ENCODE measurements at regions of chr7 and their contacts with region 1.

Region 1: GRCh38 chr7:78052112-78052511 is 253.5 kb downstream of the PHTF2 start:
- DNase-seq: no peak
- ATAC-seq: no peak
- H3K4me3 ChIP-seq: no peak overlapping the region
- H3K27ac ChIP-seq: no peak overlapping the region
- H3K4me1 ChIP-seq: no peaks in the 10 kb centered on the region
- H3K27me3 ChIP-seq: peaks cover 27% of the 10 kb centered on the region
- CTCF ChIP-seq: no peak

Region 2: DNA sequence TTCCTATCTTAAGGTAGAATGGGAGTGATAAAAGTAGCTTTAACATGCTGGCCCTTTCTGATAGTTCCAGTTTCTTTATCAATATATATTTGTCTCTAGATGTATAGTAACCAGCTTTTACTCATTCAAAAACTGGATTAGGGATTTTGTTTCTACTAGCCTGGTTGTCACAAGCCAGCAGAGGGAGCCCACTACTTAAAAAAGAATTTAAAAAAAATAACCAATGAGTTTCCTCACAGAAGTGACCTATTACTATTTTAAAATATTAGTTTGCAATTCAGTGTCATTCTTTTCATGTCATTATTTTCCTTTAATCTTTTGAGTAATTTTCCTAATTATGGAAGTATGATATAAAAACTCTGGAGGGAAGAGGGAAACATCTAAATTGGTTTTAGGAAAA is 111.5 kb before region 1 on chr7:
- CTCF ChIA-PET with region 1: interaction called, 11 read pairs
- POLR2A ChIA-PET with region 1: no interaction called
- intact Hi-C with region 1: no loop called
- DNase-seq: peak; percentile 45
- ATAC-seq: peak; percentile 59
- H3K4me3 ChIP-seq: no peak overlapping the region
- H3K27ac ChIP-seq: no peak overlapping the region
- H3K4me1 ChIP-seq: no peaks in the 10 kb centered on the region
- H3K27me3 ChIP-seq: no peaks in the 10 kb centered on the region
- CTCF ChIP-seq: peak; percentile 79

Region 3: DNA sequence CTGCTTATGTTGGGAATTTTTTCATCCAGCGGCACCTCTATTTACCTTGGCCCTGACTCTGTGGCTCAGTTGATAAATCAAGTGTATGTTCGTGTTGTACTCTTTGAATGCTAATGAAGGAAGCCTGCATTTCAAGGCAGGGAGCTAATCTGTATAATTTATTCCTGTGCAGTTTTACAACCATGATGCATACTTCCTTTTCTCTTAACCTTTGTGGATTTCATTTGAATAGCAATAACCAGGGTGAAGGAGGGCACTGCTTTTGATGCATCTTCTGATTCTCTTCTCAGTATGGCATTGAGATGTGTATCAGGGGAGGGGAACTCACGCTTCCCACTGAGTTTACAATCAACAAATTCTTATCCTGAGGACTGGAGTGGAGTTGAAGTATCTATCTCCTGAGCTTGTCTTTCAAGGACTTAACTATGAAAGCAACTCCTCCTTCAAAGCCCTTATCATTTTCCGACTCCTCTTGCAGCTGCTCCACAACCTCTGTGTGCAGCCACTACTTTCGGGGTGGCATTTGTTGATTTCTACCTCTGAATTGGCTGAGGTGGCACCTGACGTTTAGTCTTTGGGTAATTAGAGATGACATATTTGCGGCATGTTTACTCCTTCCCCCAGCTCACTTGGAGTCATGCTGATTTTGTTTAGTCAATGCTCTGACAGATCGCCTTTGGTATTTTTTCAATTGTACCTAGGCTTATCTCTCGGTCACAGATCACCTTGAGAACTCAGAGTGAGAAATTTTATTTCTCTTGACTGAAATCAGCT is 21.7 kb after region 1 on chr7:
- CTCF ChIA-PET with region 1: no interaction called
- POLR2A ChIA-PET with region 1: no interaction called
- intact Hi-C with region 1: no loop called
- DNase-seq: peak; percentile 22
- ATAC-seq: peak; percentile 29; the same call in 1 of the 2 replicates
- H3K4me3 ChIP-seq: no peak overlapping the region
- H3K27ac ChIP-seq: no peak overlapping the region
- H3K4me1 ChIP-seq: no peaks in the 10 kb centered on the region
- H3K27me3 ChIP-seq: peaks cover 32% of the 10 kb centered on the region
- CTCF ChIP-seq: no peak